ENCODE measurements at regions of chr6 and their contacts with region 1.

Region 1: GRCh38 chr6:153231048-153231646 is 100.1 kb upstream of the RGS17 start:
- DNase-seq: no peak
- H3K4me3 Mint-ChIP-seq: no peak overlapping the region
- H3K27ac Mint-ChIP-seq: no peak overlapping the region
- H3K4me1 Mint-ChIP-seq: no peaks in the 10 kb centered on the region
- H3K27me3 Mint-ChIP-seq: no peaks in the 10 kb centered on the region

Region 2: DNA sequence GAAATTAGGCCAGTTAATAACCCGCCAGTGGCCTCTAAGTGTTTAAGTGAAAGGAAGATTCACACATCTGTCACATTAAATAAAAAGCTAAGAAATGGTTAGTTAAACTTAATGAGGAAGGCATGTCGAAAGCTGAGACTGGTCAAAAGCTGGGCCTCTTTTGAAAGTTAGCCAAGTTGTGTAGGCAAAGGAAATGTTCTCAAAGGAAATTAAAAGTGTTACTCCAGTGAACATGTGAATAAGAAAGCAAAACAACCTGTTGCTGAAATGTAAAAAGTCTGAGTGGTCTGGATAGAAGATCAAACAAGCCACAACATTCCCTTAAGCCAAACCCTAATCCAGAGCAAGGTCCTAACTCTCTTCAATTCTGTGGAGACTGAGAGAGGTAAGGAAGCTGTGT is 217.7 kb before region 1 on chr6:
- intact Hi-C with region 1: no loop called
- DNase-seq: no peak
- H3K4me3 Mint-ChIP-seq: no peak overlapping the region
- H3K27ac Mint-ChIP-seq: no peak overlapping the region
- H3K4me1 Mint-ChIP-seq: no peaks in the 10 kb centered on the region
- H3K27me3 Mint-ChIP-seq: peaks cover 32% of the 10 kb centered on the region

Region 3: DNA sequence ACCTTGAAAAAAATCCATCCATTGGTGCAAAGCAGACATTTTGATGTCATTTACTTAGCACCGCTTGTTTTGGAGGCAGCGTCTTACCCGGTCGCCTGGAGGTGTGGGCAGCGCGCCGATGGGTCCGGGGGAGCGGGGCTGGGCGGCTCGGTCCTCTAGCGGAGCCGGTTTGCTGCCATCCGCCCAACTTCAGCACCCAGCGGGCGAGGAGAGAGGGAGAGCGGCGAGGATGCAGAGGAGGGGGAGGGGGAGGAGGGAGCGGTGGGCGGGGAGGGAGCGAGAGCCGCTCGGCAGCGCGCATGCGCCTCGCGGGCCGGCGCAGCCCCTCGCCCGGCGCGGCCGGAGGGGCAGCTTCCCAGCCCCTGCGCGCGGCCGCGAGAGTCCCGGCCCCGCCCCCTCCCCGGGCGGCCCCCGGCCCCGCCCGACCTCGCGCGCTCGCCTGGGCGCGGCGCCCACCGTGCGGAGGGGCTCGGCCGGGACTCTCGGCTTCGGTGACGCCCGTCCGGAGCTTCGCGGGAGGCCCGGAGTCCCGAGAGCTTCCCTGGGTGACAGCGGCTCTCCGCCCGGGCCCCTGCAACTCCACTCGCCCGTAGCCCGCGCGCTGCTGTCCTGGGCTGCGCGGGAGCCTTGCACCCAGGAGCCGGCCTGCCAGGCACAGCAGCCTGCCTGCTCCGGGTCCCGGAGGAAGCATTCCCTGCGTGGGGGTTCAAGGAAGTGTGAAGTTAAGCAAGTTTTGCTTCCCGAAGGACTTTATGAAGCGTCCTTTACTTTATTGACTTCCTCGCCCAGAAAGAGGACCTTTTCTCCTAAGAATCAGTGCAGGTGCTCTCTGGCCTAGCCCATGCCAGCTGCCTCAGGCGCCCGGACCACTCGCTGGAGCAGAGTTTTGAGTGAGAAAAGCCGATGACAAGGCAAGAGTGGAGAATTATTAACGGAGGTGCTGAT is 99.8 kb before region 1 on chr6 and contains the start of gene RGS17:
- intact Hi-C with region 1: no loop called
- DNase-seq: no peak
- H3K4me3 Mint-ChIP-seq: peak within 1 kb of the TSS; percentile 79
- H3K27ac Mint-ChIP-seq: no peak within 1 kb of the TSS
- H3K4me1 Mint-ChIP-seq: peaks cover 15% of the 10 kb centered on the region
- H3K27me3 Mint-ChIP-seq: peaks cover 47% of the 10 kb centered on the region
- total RNA-seq, gene RGS17: not detected in 2 replicates

Region 4: GRCh38 chr6:153312641-153313040 is 81.5 kb after region 1 on chr6:
- intact Hi-C with region 1: loop called (anchors 1 kb)
- DNase-seq: peak; percentile 1
- H3K4me3 Mint-ChIP-seq: no peak overlapping the region
- H3K27ac Mint-ChIP-seq: no peak overlapping the region
- H3K4me1 Mint-ChIP-seq: no peaks in the 10 kb centered on the region
- H3K27me3 Mint-ChIP-seq: no peaks in the 10 kb centered on the region

Region 5: GRCh38 chr6:153511896-153512496 is 280.8 kb after region 1 on chr6:
- intact Hi-C with region 1: loop called (anchors 1 kb)
- DNase-seq: no peak
- H3K4me3 Mint-ChIP-seq: no peak overlapping the region
- H3K27ac Mint-ChIP-seq: no peak overlapping the region
- H3K4me1 Mint-ChIP-seq: no peaks in the 10 kb centered on the region
- H3K27me3 Mint-ChIP-seq: no peaks in the 10 kb centered on the region

Region 6: GRCh38 chr6:153947808-153948447 is 716.8 kb after region 1 on chr6:
- intact Hi-C with region 1: loop called (anchors 2 kb)
- DNase-seq: no peak
- H3K4me3 Mint-ChIP-seq: no peak overlapping the region
- H3K27ac Mint-ChIP-seq: no peak overlapping the region
- H3K4me1 Mint-ChIP-seq: no peaks in the 10 kb centered on the region
- H3K27me3 Mint-ChIP-seq: no peaks in the 10 kb centered on the region

Measured in activated T-helper 1 cell treated with anti-CD3 and anti-CD28 coated beads, Interleukin-12 subunit alpha, Interleukin-12 subunit beta, Interleukin-2, Interleukin-4 antibody, amounts not matched to agents 30 ng/mL and 10 ng/mL and 1 ng/mL, durations not matched to agents 14 hours and 24 hours and 36 hours (primary cell).